OCI-LY7 (cell line): ENCODE measurements at regions of chr12 and their contacts with region 1.

Region 1: GRCh38 chr12:98593351-98594049 is at the start of gene SLC25A3:
- DNase-seq: peak; percentile 99
- H3K4me3 ChIP-seq: peak within 1 kb of the TSS; percentile 92
- H3K27ac ChIP-seq: peak within 1 kb of the TSS; percentile 60
- H3K4me1 ChIP-seq: peaks cover 17% of the 10 kb centered on the region
- CTCF ChIP-seq: no peak
- total RNA-seq, gene SLC25A3: 332 and 355 TPM in 2 replicates

Region 2: DNA sequence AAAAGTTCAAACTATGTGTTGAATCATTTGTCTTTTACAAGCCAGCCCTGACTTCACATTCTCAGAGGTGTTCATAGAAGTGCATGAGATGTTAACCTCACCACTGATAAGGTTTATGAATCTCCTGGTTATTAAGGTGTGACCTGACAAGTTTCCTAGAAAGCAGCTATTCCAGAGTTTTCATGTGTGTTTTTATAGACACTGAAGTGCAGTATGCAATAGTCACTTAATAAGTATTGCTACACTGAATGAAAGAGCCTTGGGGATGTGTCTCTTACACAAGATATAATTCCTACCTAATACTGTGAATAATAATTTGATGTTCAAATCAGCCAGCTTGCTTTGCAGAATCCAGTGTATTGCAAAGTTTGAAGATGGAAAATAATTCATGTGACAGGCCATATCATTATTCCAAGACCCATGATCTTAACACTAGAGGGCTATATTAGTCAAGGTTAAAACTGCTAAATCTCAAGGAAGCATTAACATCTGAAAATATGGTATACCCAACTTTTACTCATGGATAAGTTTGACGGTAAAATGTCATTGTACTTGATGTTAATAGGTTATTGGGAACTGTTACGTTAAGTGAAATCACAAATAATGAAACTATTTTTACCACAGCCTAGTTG is 13.0 kb after region 1 on chr12:
- CTCF ChIA-PET with region 1: interaction called, 4 read pairs
- POLR2A ChIA-PET with region 1: interaction called, 23 read pairs
- intact Hi-C with region 1: no loop called
- DNase-seq: no peak
- H3K4me3 ChIP-seq: no peak overlapping the region
- H3K27ac ChIP-seq: no peak overlapping the region
- H3K4me1 ChIP-seq: no peaks in the 10 kb centered on the region
- CTCF ChIP-seq: peak; percentile 49

Region 3: DNA sequence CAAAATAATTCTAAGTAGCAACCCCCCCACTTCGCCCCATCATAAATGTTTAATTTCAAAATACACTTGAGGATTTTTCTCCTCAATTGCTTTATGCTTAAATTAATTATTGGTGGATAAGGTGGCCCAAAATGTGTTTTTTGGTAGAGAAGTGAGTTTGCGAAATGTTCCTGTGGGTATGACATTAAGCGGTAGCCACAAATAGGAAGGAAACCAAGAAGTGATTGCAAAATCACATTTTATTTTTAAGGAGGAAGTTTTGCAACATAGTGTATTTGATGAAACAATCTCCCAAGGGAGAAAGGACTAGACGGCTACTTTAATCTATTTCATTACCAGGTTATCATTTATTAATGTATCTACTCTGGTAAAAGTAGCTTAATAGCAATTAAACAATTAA is 25.5 kb after region 1 on chr12:
- CTCF ChIA-PET with region 1: no interaction called
- POLR2A ChIA-PET with region 1: interaction called, 11 read pairs
- intact Hi-C with region 1: no loop called
- DNase-seq: no peak
- H3K4me3 ChIP-seq: no peak overlapping the region
- H3K27ac ChIP-seq: no peak overlapping the region
- H3K4me1 ChIP-seq: no peaks in the 10 kb centered on the region
- CTCF ChIP-seq: no peak

Region 4: GRCh38 chr12:98635657-98636323 is 42.3 kb after region 1 on chr12:
- CTCF ChIA-PET with region 1: interaction called, 4 read pairs
- POLR2A ChIA-PET with region 1: interaction called, 29 read pairs
- intact Hi-C with region 1: no loop called
- DNase-seq: peak; percentile 44
- H3K4me3 ChIP-seq: peak overlapping the region; percentile 27
- H3K27ac ChIP-seq: peak overlapping the region; percentile 7
- H3K4me1 ChIP-seq: peaks cover 21% of the 10 kb centered on the region
- CTCF ChIP-seq: no peak

Region 5: GRCh38 chr12:98644711-98645402 is 51.4 kb after region 1 on chr12 and contains the starts of genes APAF1 and IKBIP:
- CTCF ChIA-PET with region 1: no interaction called
- POLR2A ChIA-PET with region 1: interaction called, 29 read pairs
- intact Hi-C with region 1: loop called (anchors 1 kb)
- DNase-seq: peak; percentile 97
- H3K4me3 ChIP-seq: peak within 1 kb of the TSS; percentile 93
- H3K27ac ChIP-seq: peak within 1 kb of the TSS; percentile 87
- H3K4me1 ChIP-seq: peaks cover 31% of the 10 kb centered on the region
- CTCF ChIP-seq: no peak
- total RNA-seq, gene APAF1: 14.7 and 16.0 TPM in 2 replicates
- total RNA-seq, gene IKBIP: 18.3 and 25.1 TPM in 2 replicates